IMR-90 (cell line): ENCODE measurements at regions of chr19 and their contacts with region 1.

Region 1: DNA sequence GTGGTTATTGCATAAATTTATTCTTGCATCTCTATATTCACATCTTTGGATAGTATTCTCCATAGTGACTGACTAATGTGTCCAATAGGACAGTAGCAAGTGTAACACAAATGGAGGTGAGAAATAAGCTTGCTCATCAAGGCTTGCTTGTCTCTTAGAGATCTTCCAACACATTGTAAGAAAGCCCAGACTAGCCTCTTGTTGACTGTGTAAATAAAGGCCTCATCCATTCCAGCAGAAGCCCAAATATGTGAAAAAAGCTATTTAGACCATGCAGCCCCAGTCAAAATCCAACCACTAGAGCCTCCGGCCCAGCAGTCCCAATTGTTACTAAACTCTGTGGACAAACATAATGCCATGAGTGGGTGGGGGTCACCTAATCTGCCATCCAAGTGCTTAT is 2.7 kb upstream of the ZNF615 start:
- DNase-seq: no peak
- ATAC-seq: no peak
- H3K4me3 ChIP-seq: no peak overlapping the region
- H3K27ac ChIP-seq: no peak overlapping the region
- H3K4me1 ChIP-seq: no peaks in the 10 kb centered on the region
- H3K27me3 ChIP-seq: no peaks in the 10 kb centered on the region
- CTCF ChIP-seq: no peak
- POLR2A ChIP-seq: no peak
- RAD21 ChIP-seq: no peak

Region 2: DNA sequence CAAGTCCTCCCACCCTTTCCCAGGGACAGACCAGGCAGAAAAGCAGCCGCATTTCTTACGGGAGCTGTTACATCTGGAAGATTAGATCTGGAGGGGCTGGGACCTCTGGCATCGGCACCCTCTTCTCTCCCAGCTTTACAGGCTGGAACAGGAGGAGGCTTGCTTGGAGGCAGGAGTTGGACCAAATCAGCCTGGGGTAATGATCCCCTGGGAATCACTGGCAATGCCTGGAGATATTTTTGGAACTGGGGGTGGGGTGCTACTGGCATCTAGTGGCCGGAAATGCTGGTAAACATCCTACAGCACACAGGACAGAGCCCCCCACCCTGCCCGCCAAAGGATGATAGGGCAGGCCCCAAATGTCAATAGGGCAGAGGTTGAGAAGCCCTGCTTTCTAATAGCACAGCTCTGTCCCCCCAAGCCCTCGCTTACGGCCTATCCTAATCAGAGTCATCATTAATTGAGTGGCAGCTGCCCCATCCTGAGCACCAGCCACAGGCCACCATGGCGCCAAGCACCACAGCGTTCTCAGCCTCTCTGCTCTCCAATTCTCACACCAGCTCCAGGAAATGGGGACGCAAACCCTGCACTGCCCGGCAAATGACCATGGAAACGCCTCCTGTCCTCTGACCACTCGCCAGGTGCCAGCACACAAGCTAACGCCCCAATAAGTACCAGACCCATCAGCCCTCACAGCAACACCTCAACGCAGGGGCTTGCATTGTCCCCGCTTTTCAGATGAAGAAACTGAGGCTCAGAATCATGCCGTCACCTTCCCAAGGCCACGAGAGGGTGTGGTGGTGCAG is 1463.1 kb before region 1 on chr19:
- CTCF ChIA-PET with region 1: no interaction called
- POLR2A ChIA-PET with region 1: no interaction called
- dilution Hi-C with region 1: no loop called
- in situ Hi-C with region 1: no loop called
- intact Hi-C with region 1: no loop called
- DNase-seq: no peak
- ATAC-seq: no peak
- H3K4me3 ChIP-seq: no peak overlapping the region
- H3K27ac ChIP-seq: no peak overlapping the region
- H3K4me1 ChIP-seq: no peaks in the 10 kb centered on the region; the same call in 1 of the 2 replicates
- H3K27me3 ChIP-seq: peaks cover 21% of the 10 kb centered on the region
- CTCF ChIP-seq: no peak
- POLR2A ChIP-seq: no peak
- RAD21 ChIP-seq: no peak

Region 3: DNA sequence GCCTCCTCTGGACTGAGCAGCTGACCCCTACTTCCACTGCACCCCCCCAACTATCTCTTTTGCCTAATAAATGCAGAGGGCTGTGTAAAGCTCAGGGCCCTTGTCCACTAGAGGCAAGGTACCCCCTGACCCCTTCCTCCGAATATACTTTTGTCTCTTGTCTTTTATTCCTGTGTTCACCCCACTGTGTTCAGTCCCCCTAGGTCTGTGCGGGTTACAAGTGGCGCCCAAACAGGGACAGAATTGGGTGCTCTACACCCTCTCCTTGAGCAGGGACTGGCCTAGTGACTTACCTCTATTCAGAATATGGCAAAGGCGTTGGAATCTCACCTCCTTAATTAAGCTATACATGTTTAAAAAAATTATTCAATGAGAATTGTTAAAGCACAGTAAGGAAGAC is 39.0 kb before region 1 on chr19:
- CTCF ChIA-PET with region 1: interaction called, 10 read pairs
- POLR2A ChIA-PET with region 1: no interaction called
- dilution Hi-C with region 1: no loop called
- in situ Hi-C with region 1: no loop called
- intact Hi-C with region 1: no loop called
- DNase-seq: peak; percentile 13
- ATAC-seq: no peak
- H3K4me3 ChIP-seq: no peak overlapping the region
- H3K27ac ChIP-seq: no peak overlapping the region
- H3K4me1 ChIP-seq: no peaks in the 10 kb centered on the region
- H3K27me3 ChIP-seq: no peaks in the 10 kb centered on the region
- CTCF ChIP-seq: no peak
- POLR2A ChIP-seq: no peak
- RAD21 ChIP-seq: no peak

Region 4: DNA sequence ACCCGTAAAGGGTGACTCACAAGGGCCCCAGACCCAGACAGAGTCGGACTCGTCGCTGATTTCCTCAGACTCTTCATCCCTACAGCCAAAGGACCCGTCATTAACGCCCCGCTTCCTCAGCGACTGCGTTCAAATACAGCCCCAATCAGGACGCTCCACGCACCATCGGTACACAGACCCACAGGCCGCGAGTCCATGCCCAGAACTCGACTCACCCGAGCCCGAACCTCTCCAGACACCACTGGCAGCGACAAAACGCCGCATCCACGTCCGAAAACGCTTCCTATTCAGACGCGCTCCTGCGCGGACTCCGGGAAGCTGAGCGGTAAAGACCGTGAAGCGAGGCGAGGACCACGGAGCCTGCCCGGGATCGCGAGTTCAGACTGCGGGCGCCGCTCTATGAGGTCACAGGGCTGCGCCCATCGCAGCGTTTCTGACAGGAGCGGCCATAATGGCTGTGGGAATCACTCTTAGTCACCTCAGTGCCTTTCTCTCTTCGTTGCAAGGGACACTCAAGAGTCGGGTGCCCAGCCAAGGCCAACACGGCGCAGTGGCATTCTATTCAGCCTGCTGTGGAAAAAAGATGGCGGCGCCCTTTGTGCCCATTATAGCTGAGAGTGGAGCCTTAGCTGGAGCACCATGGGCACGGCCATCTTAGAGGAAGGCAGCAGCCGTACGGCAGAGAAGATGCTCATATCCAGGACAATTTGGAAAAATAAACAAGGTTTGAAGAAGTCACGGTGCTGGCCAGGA is 17.5 kb after region 1 on chr19 and contains the start of gene ZNF614:
- CTCF ChIA-PET with region 1: no interaction called
- POLR2A ChIA-PET with region 1: no interaction called
- dilution Hi-C with region 1: no loop called
- in situ Hi-C with region 1: no loop called
- intact Hi-C with region 1: no loop called
- DNase-seq: peak; percentile 86
- ATAC-seq: peak; percentile 96
- H3K4me3 ChIP-seq: peak within 1 kb of the TSS; percentile 88
- H3K27ac ChIP-seq: peak within 1 kb of the TSS; percentile 92
- H3K4me1 ChIP-seq: peaks cover 4% of the 10 kb centered on the region; the same call in 1 of the 2 replicates
- H3K27me3 ChIP-seq: no peaks in the 10 kb centered on the region
- CTCF ChIP-seq: no peak
- POLR2A ChIP-seq: peak; percentile 93
- RAD21 ChIP-seq: no peak
- total RNA-seq, gene ZNF614: 12.4 and 13.9 TPM in 2 replicates

Region 5: GRCh38 chr19:52322429-52322828 is 311.8 kb after region 1 on chr19:
- CTCF ChIA-PET with region 1: no interaction called
- POLR2A ChIA-PET with region 1: no interaction called
- dilution Hi-C with region 1: no loop called
- in situ Hi-C with region 1: no loop called
- intact Hi-C with region 1: no loop called
- DNase-seq: no peak
- ATAC-seq: no peak
- H3K4me3 ChIP-seq: no peak overlapping the region
- H3K27ac ChIP-seq: no peak overlapping the region
- H3K4me1 ChIP-seq: no peaks in the 10 kb centered on the region
- H3K27me3 ChIP-seq: no peaks in the 10 kb centered on the region
- CTCF ChIP-seq: no peak
- POLR2A ChIP-seq: no peak
- RAD21 ChIP-seq: no peak